CD4-positive, alpha-beta memory T cell (primary cell): ENCODE measurements at regions of chr7 and their contacts with region 1.

Region 1: GRCh38 chr7:30284298-30285066 is at the start of gene ZNRF2:
- DNase-seq: peak; percentile 97 to 100 (median 99)
- H3K4me3 ChIP-seq: peak within 1 kb of the TSS; percentile 57 to 62
- H3K4me3 Mint-ChIP-seq: peak within 1 kb of the TSS; percentile 83 to 95 (median 87)
- H3K27ac ChIP-seq: peak within 1 kb of the TSS; percentile 68
- H3K27ac Mint-ChIP-seq: peak within 1 kb of the TSS; percentile 72 to 97 (median 95)
- H3K4me1 ChIP-seq: peaks cover 44% of the 10 kb centered on the region
- H3K4me1 Mint-ChIP-seq: peaks cover 32 to 55% (median 38%) of the 10 kb centered on the region in 4 donors
- H3K27me3 ChIP-seq: no peaks in the 10 kb centered on the region
- H3K27me3 Mint-ChIP-seq: peaks cover 0 to 1% of the 10 kb centered on the region in 2 donors
- total RNA-seq, gene ZNRF2: 37.3 to 39.4 TPM

Region 2: DNA sequence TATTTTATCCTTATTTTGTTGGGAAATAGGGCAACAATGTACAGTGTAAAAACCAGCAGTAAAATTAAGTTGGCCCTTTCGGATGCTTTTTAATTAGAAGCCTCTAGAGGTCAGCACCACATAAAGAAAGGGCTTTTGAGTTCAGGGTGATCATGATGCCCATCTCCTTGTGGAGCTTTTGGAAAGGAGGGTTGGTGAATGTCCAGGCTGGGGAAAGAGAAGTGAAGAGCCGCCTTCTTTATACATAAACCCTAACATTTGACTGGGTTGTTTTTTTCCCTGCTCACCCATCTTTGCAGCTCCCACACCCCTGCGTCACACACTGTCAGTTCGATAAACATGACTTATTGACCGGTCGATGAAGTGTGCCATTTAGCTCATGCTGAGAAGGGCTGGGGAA is 119.9 kb before region 1 on chr7:
- CTCF ChIA-PET with region 1: no interaction called
- POLR2A ChIA-PET with region 1: no interaction called
- intact Hi-C with region 1: loop called (anchors 10 kb)
- DNase-seq: peak in 1 of 5 donors; percentile 20
- H3K4me3 ChIP-seq: no peak overlapping the region
- H3K4me3 Mint-ChIP-seq: no peak overlapping the region
- H3K27ac ChIP-seq: no peak overlapping the region
- H3K27ac Mint-ChIP-seq: no peak overlapping the region
- H3K4me1 ChIP-seq: peaks cover 15% of the 10 kb centered on the region
- H3K4me1 Mint-ChIP-seq: peaks cover 12 to 30% (median 20%) of the 10 kb centered on the region in 4 donors
- H3K27me3 ChIP-seq: no peaks in the 10 kb centered on the region
- H3K27me3 Mint-ChIP-seq: no peaks in the 10 kb centered on the region

Region 3: GRCh38 chr7:30330134-30331111 is 45.9 kb after region 1 on chr7:
- CTCF ChIA-PET with region 1: no interaction called
- POLR2A ChIA-PET with region 1: interaction called, 17 read pairs
- intact Hi-C with region 1: no loop called
- DNase-seq: peak; percentile 45 to 71 (median 67)
- H3K4me3 ChIP-seq: peak overlapping the region in 1 of 2 donors; percentile 23
- H3K4me3 Mint-ChIP-seq: peak overlapping the region; percentile 54 to 87 (median 69)
- H3K27ac ChIP-seq: peak overlapping the region; percentile 30
- H3K27ac Mint-ChIP-seq: peak overlapping the region; percentile 56 to 91 (median 88)
- H3K4me1 ChIP-seq: peaks cover 58% of the 10 kb centered on the region
- H3K4me1 Mint-ChIP-seq: peaks cover 54 to 75% (median 65%) of the 10 kb centered on the region in 4 donors
- H3K27me3 ChIP-seq: no peaks in the 10 kb centered on the region
- H3K27me3 Mint-ChIP-seq: no peaks in the 10 kb centered on the region

Region 4: DNA sequence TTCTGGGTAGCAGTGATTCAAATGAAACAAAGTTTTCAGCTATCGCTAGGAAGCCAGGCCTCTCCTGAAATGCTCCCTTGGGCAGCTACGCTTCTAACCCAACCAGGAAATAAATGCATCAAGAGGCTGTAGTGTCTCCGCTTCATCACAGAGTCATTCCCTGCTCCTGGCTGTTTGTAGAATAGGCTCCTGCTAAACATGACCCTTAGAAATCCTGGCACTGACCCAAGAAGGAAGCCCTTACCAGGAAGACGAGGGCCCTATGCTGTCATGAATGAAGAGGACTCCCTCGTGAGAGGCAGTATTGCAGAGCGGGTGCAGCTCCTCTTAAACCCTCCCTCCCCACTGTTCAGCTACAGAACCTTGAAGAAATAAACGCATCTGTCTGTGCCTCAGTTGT is 145.8 kb after region 1 on chr7:
- CTCF ChIA-PET with region 1: no interaction called
- POLR2A ChIA-PET with region 1: no interaction called
- intact Hi-C with region 1: no loop called
- DNase-seq: no peak
- H3K4me3 ChIP-seq: no peak overlapping the region
- H3K4me3 Mint-ChIP-seq: no peak overlapping the region
- H3K27ac ChIP-seq: no peak overlapping the region
- H3K27ac Mint-ChIP-seq: peak overlapping the region in 1 of 7 donors; percentile 61
- H3K4me1 ChIP-seq: no peaks in the 10 kb centered on the region
- H3K4me1 Mint-ChIP-seq: peaks cover 0 to 3% (median 0%) of the 10 kb centered on the region in 4 donors
- H3K27me3 ChIP-seq: no peaks in the 10 kb centered on the region
- H3K27me3 Mint-ChIP-seq: no peaks in the 10 kb centered on the region

Region 5: GRCh38 chr7:30504347-30505173 is 220.1 kb after region 1 on chr7 and contains the start of gene GGCT:
- CTCF ChIA-PET with region 1: no interaction called
- POLR2A ChIA-PET with region 1: no interaction called
- intact Hi-C with region 1: loop called (anchors 1 kb)
- DNase-seq: peak; percentile 94 to 98 (median 96)
- H3K4me3 ChIP-seq: peak within 1 kb of the TSS; percentile 96 to 97
- H3K4me3 Mint-ChIP-seq: peak within 1 kb of the TSS; percentile 90 to 96 (median 94)
- H3K27ac ChIP-seq: peak within 1 kb of the TSS; percentile 72
- H3K27ac Mint-ChIP-seq: peak within 1 kb of the TSS; percentile 76 to 98 (median 94)
- H3K4me1 ChIP-seq: peaks cover 26% of the 10 kb centered on the region
- H3K4me1 Mint-ChIP-seq: peaks cover 26 to 32% (median 30%) of the 10 kb centered on the region in 4 donors
- H3K27me3 ChIP-seq: no peaks in the 10 kb centered on the region
- H3K27me3 Mint-ChIP-seq: no peaks in the 10 kb centered on the region
- total RNA-seq, gene GGCT: 11.0 to 11.9 TPM